ENCODE measurements at regions of chr5 and their contacts with region 1.

Region 1: GRCh38 chr5:8457187-8458037 is 588.5 kb downstream of the MTRR start:
- DNase-seq: peak; percentile 88
- ATAC-seq: peak; percentile 95
- H3K4me3 ChIP-seq: peak overlapping the region; percentile 3 to 72 (median 63)
- H3K4me3 Mint-ChIP-seq: peak overlapping the region; percentile 87
- H3K27ac ChIP-seq: peak overlapping the region; percentile 20 to 34
- H3K27ac Mint-ChIP-seq: peak overlapping the region; percentile 89
- H3K4me1 ChIP-seq: peaks cover 0 to 4% of the 10 kb centered on the region in 2 donors
- H3K4me1 Mint-ChIP-seq: peaks cover 17% of the 10 kb centered on the region
- H3K27me3 ChIP-seq: no peaks in the 10 kb centered on the region
- H3K27me3 Mint-ChIP-seq: no peaks in the 10 kb centered on the region
- CTCF ChIP-seq: no peak

Region 2: DNA sequence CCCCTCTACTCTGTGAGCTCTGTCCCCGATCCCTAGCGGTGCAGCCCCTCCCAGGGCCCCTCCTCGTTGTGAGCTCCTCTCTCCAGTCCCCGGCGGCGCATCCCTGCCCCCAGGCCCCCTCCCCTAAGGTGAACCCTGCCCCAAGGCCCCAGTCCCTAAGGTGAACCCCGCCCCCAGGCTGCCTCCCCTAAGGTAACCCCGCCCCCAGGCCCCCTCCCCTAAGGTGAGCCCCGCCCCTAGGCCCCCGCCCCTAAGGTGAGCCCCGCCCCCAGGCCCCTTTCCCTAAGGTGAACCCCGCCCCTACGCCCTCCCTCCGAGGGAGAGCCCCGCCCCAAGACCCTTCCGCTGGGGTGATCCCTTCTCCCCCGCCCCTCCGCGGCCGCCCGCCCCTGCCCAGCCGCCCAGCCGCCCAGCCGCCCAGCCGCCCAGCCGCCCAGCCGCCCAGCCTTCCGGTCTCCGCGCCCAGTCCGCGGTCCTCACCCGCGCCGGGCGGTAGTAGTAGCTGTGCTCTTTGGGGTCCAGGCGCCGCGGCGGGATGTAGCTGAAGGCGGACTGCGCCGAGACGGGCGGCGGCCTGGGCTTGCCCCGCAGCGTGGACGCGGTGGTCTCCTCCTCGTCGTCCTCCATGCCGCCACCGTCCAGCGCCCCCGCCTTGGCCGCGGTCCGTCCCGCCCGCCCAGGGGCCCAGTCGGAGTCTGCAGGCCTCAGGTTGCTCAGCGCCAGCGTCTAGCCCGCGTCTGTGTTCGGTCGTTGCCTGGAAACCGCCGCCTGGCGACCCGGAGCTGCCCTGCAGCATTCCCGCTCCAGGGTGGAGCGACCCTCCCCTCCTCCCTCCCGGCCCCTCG is 606.8 kb before region 1 on chr5 and contains the start of gene CFAP90:
- CTCF ChIA-PET with region 1: no interaction called
- POLR2A ChIA-PET with region 1: no interaction called
- intact Hi-C with region 1: loop called (anchors 5 kb)
- DNase-seq: peak; percentile 43
- ATAC-seq: peak; percentile 90
- H3K4me3 ChIP-seq: peak within 1 kb of the TSS in 4 of 5 experiments; percentile 28 to 56 (median 48)
- H3K4me3 Mint-ChIP-seq: peak within 1 kb of the TSS; percentile 90
- H3K27ac ChIP-seq: no peak within 1 kb of the TSS
- H3K27ac Mint-ChIP-seq: no peak within 1 kb of the TSS
- H3K4me1 ChIP-seq: peaks cover 15 to 20% of the 10 kb centered on the region in 2 donors
- H3K4me1 Mint-ChIP-seq: peaks cover 24% of the 10 kb centered on the region
- H3K27me3 ChIP-seq: peaks cover 0 to 36% (median 15%) of the 10 kb centered on the region in 4 experiments
- H3K27me3 Mint-ChIP-seq: peaks cover 17% of the 10 kb centered on the region
- CTCF ChIP-seq: no peak
- total RNA-seq, gene CFAP90: not detected in 2 replicates

Region 3: DNA sequence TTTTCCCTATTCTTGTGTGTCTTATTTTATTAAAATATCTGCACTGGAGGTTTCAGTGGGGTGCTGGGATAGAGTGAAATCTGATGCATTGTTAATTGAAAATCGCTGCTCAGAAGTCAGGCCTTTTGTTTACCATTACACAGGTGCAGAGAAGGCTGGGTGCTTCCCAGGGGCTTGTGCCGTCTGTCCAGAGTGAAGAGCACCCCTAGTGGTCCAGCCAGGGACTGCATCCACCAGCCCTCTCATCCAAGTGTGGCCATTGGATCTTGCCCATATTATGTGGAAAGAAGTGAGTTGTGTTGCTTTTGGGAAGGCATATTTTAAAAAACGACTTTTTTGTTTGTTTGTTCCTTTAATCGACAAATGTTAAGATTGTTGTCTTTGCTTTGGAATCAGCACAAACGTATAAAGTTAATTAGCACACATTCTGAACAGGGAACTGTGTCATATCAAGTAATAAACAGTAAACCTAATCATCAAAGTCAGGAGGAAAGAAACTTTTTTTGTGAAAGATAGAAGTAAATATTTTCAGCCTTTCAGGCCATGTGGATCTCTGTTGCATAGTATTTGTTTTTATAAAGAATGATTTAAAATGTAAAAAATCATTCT is 272.9 kb before region 1 on chr5:
- CTCF ChIA-PET with region 1: no interaction called
- POLR2A ChIA-PET with region 1: no interaction called
- intact Hi-C with region 1: no loop called
- DNase-seq: peak; percentile 28
- ATAC-seq: peak; percentile 69
- H3K4me3 ChIP-seq: no peak overlapping the region
- H3K4me3 Mint-ChIP-seq: no peak overlapping the region
- H3K27ac ChIP-seq: no peak overlapping the region
- H3K27ac Mint-ChIP-seq: no peak overlapping the region
- H3K4me1 ChIP-seq: no peaks in the 10 kb centered on the region
- H3K4me1 Mint-ChIP-seq: peaks cover 2% of the 10 kb centered on the region
- H3K27me3 ChIP-seq: no peaks in the 10 kb centered on the region
- H3K27me3 Mint-ChIP-seq: peaks cover 3% of the 10 kb centered on the region
- CTCF ChIP-seq: peak; percentile 92

Region 4: DNA sequence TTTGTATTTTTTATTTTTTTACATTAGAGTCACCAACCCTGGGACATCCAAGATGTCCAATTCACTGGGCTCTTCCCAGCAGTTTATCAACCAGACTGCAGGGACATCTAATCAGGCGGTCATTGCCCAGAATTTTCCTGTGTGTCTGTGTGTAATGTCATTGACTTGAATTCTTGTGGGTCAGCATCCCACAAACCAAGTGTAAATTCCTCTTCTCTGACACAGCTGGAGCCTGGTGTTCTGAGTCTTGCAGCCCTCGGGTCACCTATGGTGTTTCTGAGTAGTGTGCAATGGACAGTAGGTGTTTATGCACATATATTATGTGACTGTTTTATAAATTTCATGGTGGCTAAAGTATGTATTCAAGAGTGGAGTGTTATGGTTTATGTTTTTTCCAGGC is 272.8 kb after region 1 on chr5:
- CTCF ChIA-PET with region 1: no interaction called
- POLR2A ChIA-PET with region 1: no interaction called
- intact Hi-C with region 1: no loop called
- DNase-seq: no peak
- ATAC-seq: no peak
- H3K4me3 ChIP-seq: no peak overlapping the region
- H3K4me3 Mint-ChIP-seq: no peak overlapping the region
- H3K27ac ChIP-seq: no peak overlapping the region
- H3K27ac Mint-ChIP-seq: no peak overlapping the region
- H3K4me1 ChIP-seq: no peaks in the 10 kb centered on the region
- H3K4me1 Mint-ChIP-seq: no peaks in the 10 kb centered on the region
- H3K27me3 ChIP-seq: no peaks in the 10 kb centered on the region
- H3K27me3 Mint-ChIP-seq: no peaks in the 10 kb centered on the region
- CTCF ChIP-seq: no peak

Measured in B cell (primary cell).